ENCODE measurements at regions of chr5 and their contacts with region 1.

Region 1: GRCh38 chr5:131289738-131290137 is 25.9 kb downstream of the CDC42SE2 start:
- DNase-seq: peak; percentile 55
- ATAC-seq: peak; percentile 74
- H3K4me3 Mint-ChIP-seq: peak overlapping the region; percentile 62
- H3K27ac Mint-ChIP-seq: peak overlapping the region; percentile 94
- H3K4me1 Mint-ChIP-seq: peaks cover 70% of the 10 kb centered on the region
- H3K27me3 Mint-ChIP-seq: no peaks in the 10 kb centered on the region
- CTCF ChIP-seq: no peak

Region 2: GRCh38 chr5:131272307-131272706 is 17.4 kb before region 1 on chr5:
- CTCF ChIA-PET with region 1: interaction called, 3 read pairs
- POLR2A ChIA-PET with region 1: interaction called, 7 read pairs
- intact Hi-C with region 1: loop called (anchors 2 kb)
- DNase-seq: no peak
- ATAC-seq: peak; percentile 41
- H3K4me3 Mint-ChIP-seq: peak overlapping the region; percentile 72
- H3K27ac Mint-ChIP-seq: peak overlapping the region; percentile 91
- H3K4me1 Mint-ChIP-seq: peaks cover 61% of the 10 kb centered on the region
- H3K27me3 Mint-ChIP-seq: no peaks in the 10 kb centered on the region
- CTCF ChIP-seq: no peak

Region 3: DNA sequence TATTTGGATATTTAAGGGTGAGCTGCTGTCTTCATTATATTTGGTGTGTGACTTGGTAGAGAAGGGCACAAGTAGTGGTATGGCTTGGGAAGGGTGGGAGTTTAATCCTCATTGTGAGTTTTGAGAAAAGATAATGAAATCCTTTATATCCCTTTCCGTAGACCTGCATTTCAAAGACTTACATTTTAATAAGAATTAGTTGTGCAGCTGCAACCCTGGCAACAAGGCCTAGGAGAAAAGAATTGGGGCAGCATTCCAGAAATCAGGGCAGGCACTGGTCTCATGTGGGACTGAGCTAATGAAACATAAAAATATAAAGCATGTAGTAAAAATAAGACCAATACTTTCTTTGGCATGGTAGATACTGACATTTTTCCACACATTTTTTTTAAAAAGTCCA is 34.6 kb after region 1 on chr5:
- CTCF ChIA-PET with region 1: no interaction called
- POLR2A ChIA-PET with region 1: interaction called, 3 read pairs
- intact Hi-C with region 1: loop called (anchors 5 kb)
- DNase-seq: no peak
- ATAC-seq: no peak
- H3K4me3 Mint-ChIP-seq: no peak overlapping the region
- H3K27ac Mint-ChIP-seq: peak overlapping the region; percentile 26
- H3K4me1 Mint-ChIP-seq: peaks cover 76% of the 10 kb centered on the region
- H3K27me3 Mint-ChIP-seq: no peaks in the 10 kb centered on the region
- CTCF ChIP-seq: no peak

Region 4: DNA sequence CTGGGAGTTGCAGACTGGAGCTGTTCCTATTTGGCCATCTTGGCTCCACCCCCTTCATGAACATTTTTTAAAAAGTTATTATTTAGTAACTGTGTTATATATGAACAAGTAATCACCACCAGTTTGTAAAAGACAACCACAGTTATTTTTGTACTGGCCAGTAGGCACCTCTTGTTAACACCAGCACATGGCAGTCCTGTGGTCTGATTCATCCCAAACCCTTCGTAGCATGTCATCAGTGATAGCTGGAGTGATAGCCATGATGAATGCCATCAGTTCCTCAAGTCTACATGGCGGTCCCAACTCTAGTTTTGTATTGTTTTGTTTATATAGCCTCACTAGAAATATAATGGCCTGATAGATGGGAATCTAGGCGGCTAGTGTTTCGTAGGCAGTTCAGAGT is 48.3 kb after region 1 on chr5:
- CTCF ChIA-PET with region 1: no interaction called
- POLR2A ChIA-PET with region 1: no interaction called
- intact Hi-C with region 1: no loop called
- DNase-seq: no peak
- ATAC-seq: no peak
- H3K4me3 Mint-ChIP-seq: no peak overlapping the region
- H3K27ac Mint-ChIP-seq: peak overlapping the region; percentile 76
- H3K4me1 Mint-ChIP-seq: peaks cover 80% of the 10 kb centered on the region
- H3K27me3 Mint-ChIP-seq: no peaks in the 10 kb centered on the region
- CTCF ChIP-seq: no peak

Region 5: GRCh38 chr5:131496400-131497007 is 206.8 kb after region 1 on chr5:
- CTCF ChIA-PET with region 1: no interaction called
- POLR2A ChIA-PET with region 1: no interaction called
- intact Hi-C with region 1: no loop called
- DNase-seq: peak; percentile 21
- ATAC-seq: peak; percentile 60
- H3K4me3 Mint-ChIP-seq: no peak overlapping the region
- H3K27ac Mint-ChIP-seq: peak overlapping the region; percentile 10
- H3K4me1 Mint-ChIP-seq: peaks cover 9% of the 10 kb centered on the region
- H3K27me3 Mint-ChIP-seq: no peaks in the 10 kb centered on the region
- CTCF ChIP-seq: no peak

Measured in activated CD8-positive, alpha-beta T cell treated with anti-CD3 and anti-CD28 coated beads for 36 hours (primary cell).